Heart left ventricle (tissue), 16 donors: ENCODE measurements at regions of chr3 and their contacts with region 1.

Region 1: DNA sequence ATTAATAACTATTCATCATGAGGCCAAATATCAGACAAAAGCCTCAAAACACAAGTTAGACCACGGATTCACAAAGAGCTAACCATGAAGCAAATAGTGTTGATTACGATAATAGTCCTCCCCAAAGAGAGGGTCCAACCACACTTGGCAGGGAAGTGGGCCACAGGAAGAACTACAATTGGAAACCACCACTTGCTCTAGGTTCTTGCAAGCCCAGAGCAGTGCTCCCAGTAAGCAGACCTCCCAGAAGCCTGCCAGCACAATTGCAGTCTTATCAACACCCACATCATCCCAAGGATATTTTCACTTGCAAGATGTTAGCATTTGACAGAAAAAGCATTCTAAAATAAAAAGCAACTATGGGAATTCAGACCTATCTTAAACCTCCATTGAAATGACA is 11.3 kb downstream of the SETD2 start:
- DNase-seq: no peak
- ATAC-seq: no peak
- H3K4me3 ChIP-seq: no peak overlapping the region
- H3K27ac ChIP-seq: no peak overlapping the region
- H3K4me1 ChIP-seq: peaks cover 0 to 78% (median 37%) of the 10 kb centered on the region in 12 donors
- H3K27me3 ChIP-seq: no peaks in the 10 kb centered on the region
- CTCF ChIP-seq: no peak
- POLR2A ChIP-seq: no peak

Region 2: GRCh38 chr3:46663591-46664135 is 488.9 kb before region 1 on chr3:
- intact Hi-C with region 1: no loop called
- DNase-seq: peak in 4 of 5 donors; percentile 17 to 64 (median 40)
- ATAC-seq: peak; percentile 7 to 45 (median 17)
- H3K4me3 ChIP-seq: no peak overlapping the region
- H3K27ac ChIP-seq: peak overlapping the region; percentile 47 to 93 (median 79)
- H3K4me1 ChIP-seq: peaks cover 0 to 83% (median 44%) of the 10 kb centered on the region in 12 donors
- H3K27me3 ChIP-seq: no peaks in the 10 kb centered on the region
- CTCF ChIP-seq: peak in 11 of 12 donors; percentile 25 to 57 (median 38)
- POLR2A ChIP-seq: no peak

Region 3: DNA sequence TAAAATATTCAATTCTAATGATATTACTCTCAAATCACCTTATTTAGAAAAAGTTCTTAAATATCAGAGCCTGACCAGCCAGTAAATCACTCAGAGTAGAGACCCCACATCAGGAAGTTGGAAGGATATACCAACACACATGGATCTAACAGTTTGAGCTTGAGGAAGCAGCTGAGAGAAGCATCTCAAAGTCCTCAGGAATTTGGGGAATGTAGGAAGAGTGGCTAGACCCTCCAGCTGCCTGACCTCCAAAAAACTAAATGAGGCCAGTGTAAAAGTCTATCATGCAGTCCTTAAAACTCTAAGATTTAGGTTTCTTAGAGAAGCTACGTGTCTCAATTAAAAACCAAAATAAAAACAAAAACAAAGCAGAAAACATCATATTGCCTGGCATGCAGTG is 44.0 kb before region 1 on chr3:
- intact Hi-C with region 1: loop called in 1 of 10 experiments (anchors 10 kb)
- DNase-seq: no peak
- ATAC-seq: no peak
- H3K4me3 ChIP-seq: no peak overlapping the region
- H3K27ac ChIP-seq: no peak overlapping the region
- H3K4me1 ChIP-seq: no peaks in the 10 kb centered on the region
- H3K27me3 ChIP-seq: no peaks in the 10 kb centered on the region
- CTCF ChIP-seq: no peak
- POLR2A ChIP-seq: no peak

Region 4: DNA sequence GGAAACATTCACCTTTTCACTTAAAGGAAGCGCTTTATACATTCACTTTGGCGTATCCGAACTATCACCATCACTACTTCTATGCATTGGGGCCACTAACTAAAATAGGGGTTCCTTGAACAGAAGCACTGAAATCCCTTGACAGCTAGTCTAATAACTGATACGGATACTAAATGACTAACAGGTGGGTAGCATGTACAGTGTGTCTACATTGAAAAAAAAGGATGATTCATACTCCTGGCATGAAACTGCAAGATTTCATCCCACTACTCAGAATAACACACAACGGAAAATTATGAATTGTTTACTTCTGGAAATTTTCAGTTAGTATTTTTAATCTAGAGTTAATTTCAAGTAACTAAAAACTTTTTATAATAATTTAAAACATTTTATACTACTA is 532.5 kb after region 1 on chr3:
- intact Hi-C with region 1: no loop called
- DNase-seq: no peak
- ATAC-seq: no peak
- H3K4me3 ChIP-seq: no peak overlapping the region
- H3K27ac ChIP-seq: no peak overlapping the region
- H3K4me1 ChIP-seq: no peaks in the 10 kb centered on the region
- H3K27me3 ChIP-seq: no peaks in the 10 kb centered on the region
- CTCF ChIP-seq: no peak
- POLR2A ChIP-seq: no peak